Mammary epithelial cell (primary cell): ENCODE measurements at regions of chr19 and their contacts with region 1.

Region 1: DNA sequence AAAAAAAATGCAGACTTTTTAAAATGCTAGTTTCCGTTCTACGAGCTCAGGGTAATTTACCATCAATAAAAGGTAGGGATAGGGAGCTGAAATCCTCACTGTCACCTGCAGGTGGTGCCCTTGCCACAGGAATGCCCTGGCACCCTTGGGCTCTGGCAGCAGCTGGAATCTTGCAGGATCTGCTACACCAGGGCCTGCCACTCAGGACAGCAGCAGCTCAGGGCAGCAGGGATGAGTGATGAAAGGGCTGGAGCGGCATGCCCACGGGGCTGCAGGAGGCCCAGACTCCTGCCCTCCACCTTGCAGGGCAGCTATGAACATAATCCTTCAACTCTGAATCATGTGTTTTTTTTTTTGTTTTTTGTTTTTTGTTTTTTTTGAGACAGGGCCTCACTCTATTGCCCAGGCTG is 54.0 kb downstream of the GNG7 start:
- DNase-seq: peak; percentile 62
- H3K4me3 ChIP-seq: no peak overlapping the region
- H3K27ac ChIP-seq: no peak overlapping the region
- H3K4me1 ChIP-seq: no peaks in the 10 kb centered on the region
- H3K27me3 ChIP-seq: no peaks in the 10 kb centered on the region
- CTCF ChIP-seq: peak; percentile 84 to 95

Region 2: DNA sequence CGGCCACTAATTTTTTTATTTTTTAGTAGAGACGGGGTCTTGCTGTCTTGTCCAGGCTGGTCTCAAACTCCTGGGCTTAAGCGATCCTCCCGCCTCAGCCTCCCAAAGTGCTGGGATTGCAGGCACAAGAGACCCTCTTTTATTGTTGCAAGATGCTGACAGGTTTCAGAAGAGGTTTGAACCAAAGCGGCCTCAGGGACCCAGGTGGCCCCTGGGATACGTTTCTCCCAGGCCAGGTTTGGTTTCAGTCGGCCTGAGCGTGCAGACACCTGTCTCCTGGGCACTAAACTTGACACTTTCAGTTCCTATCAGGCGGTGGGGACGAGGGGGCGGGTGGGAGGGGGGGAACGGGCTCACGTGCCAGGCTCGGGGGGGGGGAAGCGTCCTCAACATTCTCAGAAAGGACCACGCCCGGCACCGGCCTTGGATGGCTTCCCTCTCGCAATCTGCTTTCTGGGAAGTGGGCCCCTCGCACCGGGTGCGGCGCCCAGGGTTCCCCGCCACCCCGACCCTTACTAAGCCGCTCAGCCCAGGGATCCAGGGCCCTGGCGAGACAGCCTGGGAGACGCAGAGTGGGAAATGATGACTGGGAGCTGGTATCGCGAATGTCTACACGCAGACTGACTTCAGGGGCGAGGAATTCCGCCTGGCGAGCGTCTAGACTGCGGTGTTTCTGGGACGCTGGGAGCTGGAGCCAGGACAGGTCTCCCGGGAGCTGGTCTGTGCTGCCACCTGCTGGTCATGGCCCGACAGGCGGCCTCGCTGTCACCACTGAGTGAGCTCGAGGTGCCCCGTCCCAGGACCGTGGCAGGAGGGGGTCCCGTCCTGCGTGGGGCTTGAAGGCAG is 37.7 kb before region 1 on chr19:
- CTCF ChIA-PET with region 1: no interaction called
- dilution Hi-C with region 1: no loop called
- in situ Hi-C with region 1: no loop called
- intact Hi-C with region 1: no loop called
- DNase-seq: peak; percentile 72
- H3K4me3 ChIP-seq: peak overlapping the region in 2 of 3 experiments; percentile 35 to 41
- H3K27ac ChIP-seq: no peak overlapping the region
- H3K4me1 ChIP-seq: peaks cover 6% of the 10 kb centered on the region
- H3K27me3 ChIP-seq: no peaks in the 10 kb centered on the region
- CTCF ChIP-seq: peak; percentile 84 to 99

Region 3: GRCh38 chr19:2726904-2727639 is 78.5 kb after region 1 on chr19:
- CTCF ChIA-PET with region 1: no interaction called
- dilution Hi-C with region 1: no loop called
- in situ Hi-C with region 1: no loop called
- intact Hi-C with region 1: no loop called
- DNase-seq: no peak
- H3K4me3 ChIP-seq: no peak overlapping the region
- H3K27ac ChIP-seq: no peak overlapping the region
- H3K4me1 ChIP-seq: peaks cover 25% of the 10 kb centered on the region
- H3K27me3 ChIP-seq: no peaks in the 10 kb centered on the region
- CTCF ChIP-seq: no peak

Region 4: GRCh38 chr19:2750808-2751443 is 102.4 kb after region 1 on chr19:
- CTCF ChIA-PET with region 1: interaction called, 10 read pairs
- dilution Hi-C with region 1: loop called (anchors 5 kb)
- in situ Hi-C with region 1: loop called (anchors 5 kb)
- intact Hi-C with region 1: loop called (anchors 1 kb)
- DNase-seq: no peak
- H3K4me3 ChIP-seq: no peak overlapping the region
- H3K27ac ChIP-seq: no peak overlapping the region
- H3K4me1 ChIP-seq: peaks cover 5% of the 10 kb centered on the region
- H3K27me3 ChIP-seq: no peaks in the 10 kb centered on the region
- CTCF ChIP-seq: no peak

Region 5: GRCh38 chr19:2867025-2867991 is 218.8 kb after region 1 on chr19 and contains the start of gene ZNF556:
- CTCF ChIA-PET with region 1: no interaction called
- dilution Hi-C with region 1: no loop called
- in situ Hi-C with region 1: loop called (anchors 5 kb)
- intact Hi-C with region 1: loop called (anchors 1 kb)
- DNase-seq: no peak
- H3K4me3 ChIP-seq: no peak within 1 kb of the TSS
- H3K27ac ChIP-seq: no peak within 1 kb of the TSS
- H3K4me1 ChIP-seq: no peaks in the 10 kb centered on the region
- H3K27me3 ChIP-seq: no peaks in the 10 kb centered on the region
- CTCF ChIP-seq: no peak
- total RNA-seq, gene ZNF556: 1.5 to 2.3 TPM

Region 6: GRCh38 chr19:2887391-2887914 is 238.9 kb after region 1 on chr19:
- CTCF ChIA-PET with region 1: interaction called, 3 read pairs
- dilution Hi-C with region 1: no loop called
- in situ Hi-C with region 1: no loop called
- intact Hi-C with region 1: loop called (anchors 5 kb)
- DNase-seq: peak; percentile 66
- H3K4me3 ChIP-seq: peak overlapping the region in 2 of 3 experiments; percentile 19 to 35
- H3K27ac ChIP-seq: no peak overlapping the region
- H3K4me1 ChIP-seq: no peaks in the 10 kb centered on the region
- H3K27me3 ChIP-seq: no peaks in the 10 kb centered on the region
- CTCF ChIP-seq: peak; percentile 66 to 68